Ascending aorta (tissue), 2 donors: ENCODE measurements at regions of chr19 and their contacts with region 1.

Region 1: DNA sequence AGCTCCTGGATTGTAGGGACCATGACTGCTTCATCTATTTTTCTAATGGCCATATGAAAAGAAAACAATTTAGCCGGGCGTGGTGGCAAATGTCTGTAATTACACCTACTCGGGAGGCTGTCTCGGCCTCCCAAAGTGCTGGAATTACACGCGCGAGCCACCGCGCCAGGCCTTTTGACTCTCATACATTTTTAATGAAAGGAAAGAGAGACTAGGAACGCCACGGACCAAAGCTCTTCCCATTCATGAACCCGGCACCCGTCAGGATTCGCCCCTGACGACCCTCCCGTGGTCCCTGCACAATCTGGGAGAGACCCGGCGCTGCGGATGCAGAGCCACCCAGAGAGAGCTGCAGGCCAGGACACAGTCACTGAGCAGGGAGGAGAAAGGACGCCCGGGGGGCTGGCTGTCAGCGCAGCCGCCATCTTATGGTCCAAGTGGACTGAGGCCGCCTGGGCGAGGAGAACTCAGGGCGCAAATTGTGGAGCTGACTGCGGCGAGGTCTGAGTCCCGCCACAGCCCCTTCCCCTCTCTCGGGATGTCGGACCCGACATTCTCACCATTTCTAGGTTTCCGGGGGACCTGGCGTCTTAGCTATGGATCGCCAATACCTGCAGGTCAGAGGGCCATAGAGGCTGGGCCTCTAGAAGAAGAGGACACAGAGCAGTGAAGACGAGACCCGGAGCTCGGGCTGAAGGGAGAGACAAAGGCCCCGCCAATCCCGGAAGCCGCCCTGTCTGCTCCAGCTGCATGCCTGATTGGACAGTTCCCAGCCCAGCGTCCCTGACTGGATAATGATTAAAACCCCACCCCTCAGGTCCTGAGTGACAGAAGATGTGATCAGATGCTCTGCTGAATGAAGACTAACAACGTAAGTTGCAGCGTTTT is at the start of gene ZNF681:
- DNase-seq: peak; percentile 71 to 93
- H3K4me3 ChIP-seq: peak within 1 kb of the TSS; percentile 52 to 86
- H3K27ac ChIP-seq: peak within 1 kb of the TSS; percentile 71 to 77
- H3K4me1 ChIP-seq: peaks cover 0 to 5% of the 10 kb centered on the region in 2 donors
- H3K27me3 ChIP-seq: no peaks in the 10 kb centered on the region
- CTCF ChIP-seq: peak in 1 of 3 experiments; percentile 17
- total RNA-seq, gene ZNF681: 1.9 TPM

Region 2: DNA sequence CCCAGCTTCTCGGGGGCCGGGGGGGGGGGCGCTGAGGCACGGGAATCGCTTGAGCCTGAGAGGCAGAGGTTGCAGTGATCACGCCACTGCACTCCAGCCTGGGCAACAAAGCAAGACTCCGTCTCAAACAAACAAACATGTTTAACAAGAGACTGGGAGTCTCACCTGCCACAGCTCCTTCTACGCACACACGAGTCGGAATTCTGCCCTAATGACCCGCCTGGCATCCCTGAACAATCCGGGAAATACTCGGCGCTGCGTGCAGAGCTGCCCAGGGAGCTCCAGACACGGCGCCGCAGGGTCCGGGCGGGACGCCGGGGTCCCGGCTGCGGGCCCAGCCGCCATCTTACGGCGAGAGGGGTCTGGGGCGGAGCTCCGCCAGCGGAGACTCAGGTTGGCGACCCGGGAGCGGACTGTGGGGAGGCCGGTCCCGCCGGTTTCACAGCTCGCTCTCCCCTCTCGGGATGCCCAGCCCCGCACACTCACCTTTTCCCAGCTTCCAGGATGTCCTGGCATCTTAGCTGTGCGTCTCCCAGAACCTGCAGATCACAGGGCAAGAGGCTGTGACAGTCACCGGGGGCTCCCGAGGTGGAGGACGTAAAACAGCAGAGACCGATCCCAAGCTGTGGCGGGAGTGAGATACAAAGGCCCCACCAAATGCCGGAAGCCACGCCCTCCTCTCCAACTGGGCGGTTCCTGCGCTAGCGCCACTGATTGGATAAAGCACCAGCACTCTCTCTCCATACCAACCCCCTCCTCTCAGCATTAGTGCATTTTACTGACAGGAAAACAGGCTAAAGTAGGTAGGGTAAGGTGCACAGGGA is 484.6 kb before region 1 on chr19:
- intact Hi-C with region 1: loop called (anchors 5 kb)
- DNase-seq: peak; percentile 88 to 97
- H3K4me3 ChIP-seq: peak overlapping the region; percentile 94 to 99
- H3K27ac ChIP-seq: peak overlapping the region; percentile 91
- H3K4me1 ChIP-seq: peaks cover 3 to 6% of the 10 kb centered on the region in 2 donors
- H3K27me3 ChIP-seq: no peaks in the 10 kb centered on the region
- CTCF ChIP-seq: no peak

Region 3: GRCh38 chr19:23716792-23717191 is 41.6 kb before region 1 on chr19:
- intact Hi-C with region 1: no loop called
- DNase-seq: no peak
- H3K4me3 ChIP-seq: no peak overlapping the region
- H3K27ac ChIP-seq: no peak overlapping the region
- H3K4me1 ChIP-seq: no peaks in the 10 kb centered on the region
- H3K27me3 ChIP-seq: no peaks in the 10 kb centered on the region
- CTCF ChIP-seq: no peak

Region 4: GRCh38 chr19:23817519-23817918 is 59.1 kb after region 1 on chr19:
- intact Hi-C with region 1: no loop called
- DNase-seq: no peak
- H3K4me3 ChIP-seq: no peak overlapping the region
- H3K27ac ChIP-seq: no peak overlapping the region
- H3K4me1 ChIP-seq: no peaks in the 10 kb centered on the region
- H3K27me3 ChIP-seq: no peaks in the 10 kb centered on the region
- CTCF ChIP-seq: no peak

Region 5: GRCh38 chr19:24033301-24033962 is 275.0 kb after region 1 on chr19:
- intact Hi-C with region 1: loop called (anchors 5 kb)
- DNase-seq: peak; percentile 67 to 93
- H3K4me3 ChIP-seq: peak overlapping the region; percentile 88 to 90
- H3K27ac ChIP-seq: peak overlapping the region; percentile 93 to 96
- H3K4me1 ChIP-seq: peaks cover 4 to 10% of the 10 kb centered on the region in 2 donors
- H3K27me3 ChIP-seq: no peaks in the 10 kb centered on the region
- CTCF ChIP-seq: no peak